Natural killer cell (primary cell): ENCODE measurements at regions of chr22 and their contacts with region 1.

Region 1: DNA sequence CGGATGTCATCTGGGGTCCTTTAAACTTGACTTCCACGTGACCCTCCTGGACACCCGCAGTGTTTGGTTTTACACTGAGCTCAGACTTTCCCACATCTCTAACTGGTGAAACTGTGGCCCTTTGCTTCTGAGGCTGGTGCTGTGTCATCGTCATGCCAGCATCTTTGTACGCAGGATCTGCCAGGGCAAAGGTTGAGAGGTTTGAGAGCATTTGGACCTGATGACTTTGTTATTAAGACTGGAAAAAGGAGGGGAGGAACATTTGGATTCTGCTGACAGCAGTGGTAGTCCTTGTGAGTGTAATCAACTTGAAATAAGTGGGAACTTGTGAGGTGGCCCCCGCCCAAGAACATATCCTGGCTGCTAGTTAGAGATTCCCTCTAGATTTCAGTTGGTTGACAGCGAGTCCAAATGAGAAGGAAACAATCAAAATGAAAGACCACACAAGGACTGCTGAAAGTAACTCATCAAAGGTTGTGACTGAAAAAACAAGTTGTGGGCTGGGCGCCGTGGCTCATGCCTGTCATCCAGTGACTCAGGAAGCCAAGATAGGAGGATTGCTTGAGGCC is 102.5 kb downstream of the KIAA1671 start:
- DNase-seq: peak; percentile 67 to 68
- ATAC-seq: peak; percentile 87 to 95 (median 93)
- H3K4me3 ChIP-seq: no peak overlapping the region
- H3K4me3 Mint-ChIP-seq: peak overlapping the region; percentile 58
- H3K27ac ChIP-seq: peak overlapping the region; percentile 71
- H3K27ac Mint-ChIP-seq: peak overlapping the region; percentile 78 to 86
- H3K4me1 ChIP-seq: peaks cover 27% of the 10 kb centered on the region
- H3K4me1 Mint-ChIP-seq: peaks cover 21 to 24% of the 10 kb centered on the region in 2 donors
- H3K27me3 ChIP-seq: no peaks in the 10 kb centered on the region
- H3K27me3 Mint-ChIP-seq: no peaks in the 10 kb centered on the region
- CTCF ChIP-seq: no peak

Region 2: DNA sequence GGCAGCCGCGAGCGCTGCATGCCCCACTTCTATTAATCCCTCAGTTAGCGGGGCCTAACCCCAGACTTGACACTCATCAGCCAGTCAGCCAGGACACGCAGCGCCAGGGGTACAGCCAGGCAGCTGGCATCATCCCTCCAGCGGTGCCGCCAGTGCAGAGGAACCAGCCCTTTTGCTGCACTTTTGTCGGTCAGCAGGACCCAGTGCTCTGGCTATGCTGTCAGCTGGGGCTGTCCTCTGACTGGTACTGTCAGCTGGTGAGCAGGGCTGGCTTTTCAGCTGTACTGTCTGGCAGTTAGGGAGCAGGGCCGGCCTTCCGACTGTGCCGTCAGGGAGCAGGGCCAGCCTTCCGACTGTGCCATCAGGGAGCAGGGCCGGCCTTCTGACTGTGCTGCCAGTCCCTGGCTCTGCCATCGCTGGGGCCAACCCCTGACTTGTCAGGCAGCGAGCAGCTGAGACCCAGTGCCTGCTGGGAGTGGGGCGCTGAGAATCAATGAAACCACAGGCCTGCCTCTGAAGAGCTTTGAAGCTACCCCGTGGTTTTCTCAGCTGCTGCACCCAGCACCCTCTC is 12.9 kb after region 1 on chr22:
- intact Hi-C with region 1: loop called (anchors 1 kb)
- DNase-seq: peak; percentile 72 to 96
- ATAC-seq: peak; percentile 86 to 95 (median 89)
- H3K4me3 ChIP-seq: no peak overlapping the region
- H3K4me3 Mint-ChIP-seq: peak overlapping the region; percentile 92
- H3K27ac ChIP-seq: peak overlapping the region; percentile 83
- H3K27ac Mint-ChIP-seq: peak overlapping the region; percentile 92 to 97
- H3K4me1 ChIP-seq: peaks cover 89% of the 10 kb centered on the region
- H3K4me1 Mint-ChIP-seq: peaks cover 56 to 83% of the 10 kb centered on the region in 2 donors
- H3K27me3 ChIP-seq: no peaks in the 10 kb centered on the region
- H3K27me3 Mint-ChIP-seq: no peaks in the 10 kb centered on the region
- CTCF ChIP-seq: no peak